ENCODE measurements at regions of chr6 and their contacts with region 1.

Region 1: GRCh38 chr6:41531591-41532582 is 14.3 kb upstream of the FOXP4 start:
- DNase-seq: peak; percentile 88
- H3K4me3 Mint-ChIP-seq: peak overlapping the region; percentile 74
- H3K27ac Mint-ChIP-seq: peak overlapping the region; percentile 99
- H3K4me1 Mint-ChIP-seq: peaks cover 30% of the 10 kb centered on the region
- H3K27me3 Mint-ChIP-seq: no peaks in the 10 kb centered on the region

Region 2: DNA sequence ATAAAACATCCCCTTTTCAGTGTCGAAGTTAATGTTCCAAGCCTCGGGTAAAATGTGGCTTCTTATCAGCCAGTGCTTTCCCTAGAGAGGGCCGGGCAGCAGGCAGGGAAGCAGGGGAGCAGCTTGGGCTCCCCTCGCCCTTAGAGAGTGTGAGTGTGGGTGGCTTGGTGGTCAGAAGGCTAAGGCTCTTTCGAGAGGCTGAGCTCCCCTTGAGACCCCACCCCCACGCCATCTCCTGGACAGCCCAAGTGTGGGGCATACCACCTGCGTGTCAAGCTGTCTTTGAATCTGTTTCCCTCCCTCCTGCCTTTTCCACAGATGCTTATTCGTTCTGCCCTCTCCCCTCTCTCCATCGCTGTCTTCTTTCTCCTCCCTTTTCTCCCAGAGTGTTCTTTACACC is 80.8 kb before region 1 on chr6:
- CTCF ChIA-PET with region 1: no interaction called
- POLR2A ChIA-PET with region 1: no interaction called
- intact Hi-C with region 1: no loop called
- DNase-seq: no peak
- H3K4me3 Mint-ChIP-seq: no peak overlapping the region
- H3K27ac Mint-ChIP-seq: no peak overlapping the region
- H3K4me1 Mint-ChIP-seq: no peaks in the 10 kb centered on the region
- H3K27me3 Mint-ChIP-seq: no peaks in the 10 kb centered on the region

Region 3: DNA sequence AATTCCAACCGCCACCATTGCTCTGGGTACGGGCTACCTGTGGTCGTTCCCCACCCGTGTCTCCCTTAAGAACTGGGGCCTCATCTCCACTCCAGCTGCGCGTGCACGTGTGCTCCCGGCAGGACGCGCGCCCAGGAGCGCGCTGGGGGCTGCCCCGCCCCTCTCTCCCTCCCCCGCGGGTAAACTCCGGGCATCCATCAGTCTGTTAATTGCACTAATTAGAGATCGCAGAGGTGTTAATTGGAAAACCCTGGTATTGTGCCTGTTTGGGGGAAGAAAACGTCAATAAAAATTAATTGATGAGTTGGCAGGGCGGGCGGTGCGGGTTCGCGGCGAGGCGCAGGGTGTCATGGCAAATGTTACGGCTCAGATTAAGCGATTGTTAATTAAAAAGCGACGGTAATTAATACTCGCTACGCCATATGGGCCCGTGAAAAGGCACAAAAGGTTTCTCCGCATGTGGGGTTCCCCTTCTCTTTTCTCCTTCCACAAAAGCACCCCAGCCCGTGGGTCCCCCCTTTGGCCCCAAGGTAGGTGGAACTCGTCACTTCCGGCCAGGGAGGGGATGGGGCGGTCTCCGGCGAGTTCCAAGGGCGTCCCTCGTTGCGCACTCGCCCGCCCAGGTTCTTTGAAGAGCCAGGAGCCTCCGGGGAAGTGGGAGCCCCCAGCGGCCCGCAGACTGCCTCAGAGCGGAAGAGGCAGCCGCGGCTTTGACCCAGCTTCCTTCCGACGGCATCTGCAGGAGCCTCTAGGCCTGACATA is 28.7 kb after region 1 on chr6:
- CTCF ChIA-PET with region 1: no interaction called
- POLR2A ChIA-PET with region 1: no interaction called
- intact Hi-C with region 1: loop called (anchors 1 kb)
- DNase-seq: peak; percentile 92
- H3K4me3 Mint-ChIP-seq: peak overlapping the region; percentile 81
- H3K27ac Mint-ChIP-seq: peak overlapping the region; percentile 79
- H3K4me1 Mint-ChIP-seq: peaks cover 26% of the 10 kb centered on the region
- H3K27me3 Mint-ChIP-seq: no peaks in the 10 kb centered on the region

Region 4: DNA sequence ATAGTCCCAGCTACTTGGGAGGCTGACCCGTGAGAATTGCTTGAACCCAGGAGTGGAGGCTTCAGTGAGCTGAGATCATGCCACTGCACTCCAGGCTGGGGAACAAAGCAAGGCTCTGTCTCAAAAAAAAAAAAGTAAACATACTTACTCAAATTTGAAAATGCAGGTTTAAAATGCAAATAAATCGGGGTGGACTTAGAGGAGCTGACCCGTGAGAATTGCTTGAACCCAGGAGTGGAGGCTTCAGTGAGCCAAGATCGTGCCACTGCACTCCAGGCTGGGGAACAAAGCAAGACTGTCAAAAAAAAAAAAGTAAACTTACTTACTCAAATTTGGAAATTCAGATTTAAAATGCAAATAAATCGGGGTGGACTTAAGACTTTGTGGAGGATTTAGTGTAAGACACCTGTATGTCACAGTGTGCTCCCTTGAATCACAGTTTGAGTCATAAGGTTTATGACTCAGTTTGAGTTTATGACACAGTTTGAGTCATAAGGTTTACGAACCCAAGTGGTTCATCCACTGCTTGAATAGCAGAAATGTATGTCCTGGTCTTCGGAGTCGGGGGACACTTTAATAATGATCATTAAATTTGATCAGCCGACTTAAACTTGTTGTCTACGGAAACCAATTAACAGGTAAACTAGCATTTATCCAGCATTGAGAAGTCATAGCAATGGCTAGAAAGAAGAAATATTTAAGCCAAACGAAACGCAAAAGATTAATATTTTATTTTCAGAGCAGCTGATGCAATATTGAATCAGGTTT is 692.5 kb after region 1 on chr6:
- CTCF ChIA-PET with region 1: no interaction called
- POLR2A ChIA-PET with region 1: no interaction called
- intact Hi-C with region 1: loop called (anchors 2 kb)
- DNase-seq: peak; percentile 33
- H3K4me3 Mint-ChIP-seq: peak overlapping the region; percentile 54
- H3K27ac Mint-ChIP-seq: peak overlapping the region; percentile 80
- H3K4me1 Mint-ChIP-seq: peaks cover 21% of the 10 kb centered on the region
- H3K27me3 Mint-ChIP-seq: no peaks in the 10 kb centered on the region